Activated CD4-positive, alpha-beta T cell treated with anti-CD3 and anti-CD28 coated beads, Interleukin-2, amount 10 ng/mL, durations not matched to agents 24 days and 14 days (primary cell): ENCODE measurements at regions of chr10 and their contacts with region 1.

Region 1: GRCh38 chr10:110101464-110102144 is 93.8 kb downstream of the ADD3 start:
- DNase-seq: no peak
- H3K4me3 Mint-ChIP-seq: peak overlapping the region; percentile 44
- H3K27ac Mint-ChIP-seq: peak overlapping the region; percentile 88
- H3K4me1 Mint-ChIP-seq: peaks cover 31% of the 10 kb centered on the region
- H3K27me3 Mint-ChIP-seq: no peaks in the 10 kb centered on the region

Region 2: DNA sequence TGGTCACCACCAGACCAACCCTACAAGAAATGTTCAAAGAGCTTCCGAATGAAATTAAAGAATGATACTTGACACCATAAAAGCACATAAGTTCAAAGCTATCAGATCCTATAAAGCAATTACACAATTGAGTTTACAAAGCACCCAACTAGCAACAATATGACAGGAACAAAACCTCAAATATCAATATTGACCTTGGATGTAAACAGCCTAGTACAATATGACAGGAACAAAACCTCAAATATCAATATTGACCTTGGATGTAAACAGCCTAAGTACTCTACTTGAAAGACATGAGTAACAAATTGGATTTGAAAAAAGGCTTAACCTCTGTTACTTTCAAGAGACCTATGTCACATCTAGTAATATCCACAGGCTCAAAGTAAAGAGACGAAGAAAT is 1379.7 kb before region 1 on chr10:
- intact Hi-C with region 1: no loop called
- DNase-seq: no peak
- H3K4me3 Mint-ChIP-seq: no peak overlapping the region
- H3K27ac Mint-ChIP-seq: no peak overlapping the region
- H3K4me1 Mint-ChIP-seq: no peaks in the 10 kb centered on the region
- H3K27me3 Mint-ChIP-seq: no peaks in the 10 kb centered on the region

Region 3: DNA sequence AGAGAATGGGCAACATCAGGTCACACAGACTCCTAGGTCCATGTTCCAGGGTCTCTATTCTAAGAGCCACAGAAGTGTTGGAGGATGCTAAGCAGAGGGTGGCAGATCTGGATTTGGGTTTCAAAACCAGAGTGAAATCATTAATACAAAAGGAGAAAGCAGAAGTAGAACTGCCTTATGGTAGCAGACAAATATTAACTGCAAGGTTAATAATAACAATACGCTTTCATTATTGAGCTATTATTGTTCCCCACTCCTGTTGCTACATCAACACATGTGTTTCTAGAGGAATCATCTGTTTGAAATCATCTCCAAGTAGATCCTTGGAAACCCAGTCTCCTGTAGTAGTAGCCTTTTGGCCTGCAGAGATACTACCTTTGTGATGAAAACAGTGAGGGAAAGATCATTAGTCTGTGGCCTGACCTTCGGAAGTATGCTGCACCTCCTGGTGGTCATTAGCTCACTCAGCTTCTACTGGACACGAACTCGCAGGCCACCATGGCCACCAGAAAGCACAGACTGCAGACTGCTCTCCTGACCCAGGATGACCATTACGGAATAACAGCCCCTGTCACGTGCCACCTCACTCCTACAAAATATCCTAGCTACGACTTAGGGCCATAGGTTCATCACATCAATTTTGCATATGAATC is 262.9 kb before region 1 on chr10:
- intact Hi-C with region 1: no loop called
- DNase-seq: no peak
- H3K4me3 Mint-ChIP-seq: no peak overlapping the region
- H3K27ac Mint-ChIP-seq: no peak overlapping the region
- H3K4me1 Mint-ChIP-seq: no peaks in the 10 kb centered on the region
- H3K27me3 Mint-ChIP-seq: peaks cover 12% of the 10 kb centered on the region

Region 4: DNA sequence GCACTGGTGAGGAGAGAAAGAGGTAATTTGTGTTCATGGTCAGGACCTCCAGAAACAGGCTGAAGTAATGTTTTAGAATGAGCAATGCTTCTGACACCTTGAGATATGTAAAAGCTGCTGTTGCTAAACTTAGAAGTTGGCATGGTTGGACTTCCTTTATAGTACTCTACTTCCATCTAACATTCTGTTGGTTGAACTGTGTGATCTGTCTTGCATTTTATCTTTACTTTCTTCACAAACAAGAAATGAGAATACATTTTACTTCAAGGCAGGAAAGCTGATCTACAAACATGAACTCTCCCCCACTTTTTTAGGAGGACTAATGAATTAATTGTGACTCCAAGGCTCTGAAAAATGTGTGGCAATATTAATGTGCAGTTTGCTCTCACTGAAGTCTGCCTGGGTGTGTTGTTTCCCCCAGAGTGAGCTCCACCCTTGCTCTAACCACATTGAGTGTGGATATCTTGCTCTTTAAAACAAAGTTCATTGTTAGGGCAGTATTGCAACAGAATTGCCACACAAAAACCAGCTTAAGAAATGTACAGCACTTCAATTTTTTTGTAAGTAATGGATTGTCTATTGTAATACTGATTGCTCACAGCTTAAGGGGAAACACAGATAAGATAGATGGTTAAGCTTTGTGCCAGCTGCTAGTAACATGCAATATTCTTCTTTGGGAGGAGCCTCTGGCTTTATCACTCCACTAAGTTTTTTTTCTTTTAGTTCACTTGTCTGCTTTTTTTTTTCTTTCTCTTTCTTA is 24.9 kb before region 1 on chr10:
- intact Hi-C with region 1: loop called (anchors 1 kb)
- DNase-seq: peak; percentile 82
- H3K4me3 Mint-ChIP-seq: peak overlapping the region; percentile 85
- H3K27ac Mint-ChIP-seq: peak overlapping the region; percentile 95
- H3K4me1 Mint-ChIP-seq: peaks cover 77% of the 10 kb centered on the region
- H3K27me3 Mint-ChIP-seq: no peaks in the 10 kb centered on the region

Region 5: GRCh38 chr10:110081911-110082310 is 19.7 kb before region 1 on chr10:
- intact Hi-C with region 1: loop called (anchors 1 kb)
- DNase-seq: no peak
- H3K4me3 Mint-ChIP-seq: peak overlapping the region; percentile 70
- H3K27ac Mint-ChIP-seq: peak overlapping the region; percentile 89
- H3K4me1 Mint-ChIP-seq: peaks cover 72% of the 10 kb centered on the region
- H3K27me3 Mint-ChIP-seq: no peaks in the 10 kb centered on the region